ENCODE measurements at regions of chr1 and their contacts with region 1.

Region 1: GRCh38 chr1:154878371-154879022 is 8.4 kb upstream of the KCNN3 start:
- DNase-seq: peak; percentile 16 to 81 (median 60)
- ATAC-seq: peak; percentile 85 to 90 (median 88)
- H3K4me3 ChIP-seq: no peak overlapping the region
- H3K4me3 Mint-ChIP-seq: no peak overlapping the region
- H3K27ac ChIP-seq: no peak overlapping the region
- H3K27ac Mint-ChIP-seq: no peak overlapping the region
- H3K4me1 ChIP-seq: no peaks in the 10 kb centered on the region
- H3K4me1 Mint-ChIP-seq: no peaks in the 10 kb centered on the region
- H3K27me3 ChIP-seq: peaks cover 0 to 18% of the 10 kb centered on the region in 2 experiments
- H3K27me3 Mint-ChIP-seq: no peaks in the 10 kb centered on the region

Region 2: GRCh38 chr1:154669464-154670282 is 208.8 kb before region 1 on chr1:
- CTCF ChIA-PET with region 1: interaction called in 1 of 2 experiments, 13 read pairs
- POLR2A ChIA-PET with region 1: no interaction called
- DNase-seq: peak; percentile 44 to 85 (median 67)
- ATAC-seq: peak; percentile 97 to 100 (median 98)
- H3K4me3 ChIP-seq: no peak overlapping the region
- H3K4me3 Mint-ChIP-seq: no peak overlapping the region
- H3K27ac ChIP-seq: no peak overlapping the region
- H3K27ac Mint-ChIP-seq: peak overlapping the region in 1 of 2 donors; percentile 22
- H3K4me1 ChIP-seq: no peaks in the 10 kb centered on the region
- H3K4me1 Mint-ChIP-seq: no peaks in the 10 kb centered on the region
- H3K27me3 ChIP-seq: peaks cover 0 to 3% of the 10 kb centered on the region in 2 experiments
- H3K27me3 Mint-ChIP-seq: no peaks in the 10 kb centered on the region

Region 3: GRCh38 chr1:154695985-154696384 is 182.5 kb before region 1 on chr1:
- CTCF ChIA-PET with region 1: no interaction called
- POLR2A ChIA-PET with region 1: no interaction called
- DNase-seq: no peak
- ATAC-seq: no peak
- H3K4me3 ChIP-seq: no peak overlapping the region
- H3K4me3 Mint-ChIP-seq: no peak overlapping the region
- H3K27ac ChIP-seq: no peak overlapping the region
- H3K27ac Mint-ChIP-seq: no peak overlapping the region
- H3K4me1 ChIP-seq: no peaks in the 10 kb centered on the region
- H3K4me1 Mint-ChIP-seq: no peaks in the 10 kb centered on the region
- H3K27me3 ChIP-seq: peaks cover 0 to 10% of the 10 kb centered on the region in 2 experiments
- H3K27me3 Mint-ChIP-seq: peaks cover 0 to 16% of the 10 kb centered on the region in 2 donors

Region 4: DNA sequence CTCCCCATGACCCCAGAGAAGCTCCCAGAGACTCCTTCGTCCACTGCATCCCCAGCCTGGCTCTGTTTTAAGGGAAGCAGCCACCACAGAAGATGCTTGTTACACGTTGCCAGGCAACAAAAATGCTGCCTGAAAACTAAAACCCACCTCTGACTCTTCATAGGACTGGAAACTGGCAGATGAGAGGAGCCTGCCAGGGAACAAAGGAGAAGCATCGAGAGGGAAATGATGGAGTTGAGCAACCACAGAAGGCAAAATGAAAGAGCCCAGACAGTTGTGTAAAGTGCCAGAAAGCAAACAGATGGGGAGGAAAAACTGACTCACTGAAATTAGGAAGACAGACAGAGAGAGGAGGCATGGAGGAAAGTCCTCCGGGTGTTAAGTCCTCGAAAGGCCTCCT is 126.8 kb before region 1 on chr1:
- CTCF ChIA-PET with region 1: no interaction called
- POLR2A ChIA-PET with region 1: no interaction called
- DNase-seq: no peak
- ATAC-seq: no peak
- H3K4me3 ChIP-seq: no peak overlapping the region
- H3K4me3 Mint-ChIP-seq: no peak overlapping the region
- H3K27ac ChIP-seq: no peak overlapping the region
- H3K27ac Mint-ChIP-seq: no peak overlapping the region
- H3K4me1 ChIP-seq: peaks cover 18 to 26% of the 10 kb centered on the region in 2 experiments
- H3K4me1 Mint-ChIP-seq: peaks cover 27 to 49% (median 29%) of the 10 kb centered on the region in 3 donors
- H3K27me3 ChIP-seq: peaks cover 0 to 8% of the 10 kb centered on the region in 2 experiments
- H3K27me3 Mint-ChIP-seq: peaks cover 0 to 3% of the 10 kb centered on the region in 2 donors